Activated CD4-positive, alpha-beta T cell treated with anti-CD3 and anti-CD28 coated beads for 36 hours (primary cell): ENCODE measurements at regions of chr3 and their contacts with region 1.

Region 1: GRCh38 chr3:18717598-18717997 is 292.5 kb upstream of the SATB1 start:
- DNase-seq: no peak
- ATAC-seq: peak; percentile 38
- H3K4me3 Mint-ChIP-seq: peak overlapping the region; percentile 8
- H3K27ac Mint-ChIP-seq: peak overlapping the region; percentile 97
- H3K4me1 Mint-ChIP-seq: peaks cover 71% of the 10 kb centered on the region
- H3K27me3 Mint-ChIP-seq: no peaks in the 10 kb centered on the region

Region 2: GRCh38 chr3:18444595-18445400 is 272.8 kb before region 1 on chr3:
- CTCF ChIA-PET with region 1: interaction called, 5 read pairs
- POLR2A ChIA-PET with region 1: no interaction called
- intact Hi-C with region 1: loop called in 1 of 2 experiments (anchors 1 kb)
- DNase-seq: peak; percentile 89
- ATAC-seq: peak; percentile 66
- H3K4me3 Mint-ChIP-seq: peak overlapping the region; percentile 96
- H3K27ac Mint-ChIP-seq: peak overlapping the region; percentile 91
- H3K4me1 Mint-ChIP-seq: peaks cover 25% of the 10 kb centered on the region
- H3K27me3 Mint-ChIP-seq: no peaks in the 10 kb centered on the region

Region 3: GRCh38 chr3:18544146-18544545 is 173.5 kb before region 1 on chr3:
- CTCF ChIA-PET with region 1: no interaction called
- POLR2A ChIA-PET with region 1: interaction called, 13 read pairs
- intact Hi-C with region 1: no loop called
- DNase-seq: no peak
- ATAC-seq: no peak
- H3K4me3 Mint-ChIP-seq: no peak overlapping the region
- H3K27ac Mint-ChIP-seq: no peak overlapping the region
- H3K4me1 Mint-ChIP-seq: peaks cover 7% of the 10 kb centered on the region
- H3K27me3 Mint-ChIP-seq: no peaks in the 10 kb centered on the region

Region 4: DNA sequence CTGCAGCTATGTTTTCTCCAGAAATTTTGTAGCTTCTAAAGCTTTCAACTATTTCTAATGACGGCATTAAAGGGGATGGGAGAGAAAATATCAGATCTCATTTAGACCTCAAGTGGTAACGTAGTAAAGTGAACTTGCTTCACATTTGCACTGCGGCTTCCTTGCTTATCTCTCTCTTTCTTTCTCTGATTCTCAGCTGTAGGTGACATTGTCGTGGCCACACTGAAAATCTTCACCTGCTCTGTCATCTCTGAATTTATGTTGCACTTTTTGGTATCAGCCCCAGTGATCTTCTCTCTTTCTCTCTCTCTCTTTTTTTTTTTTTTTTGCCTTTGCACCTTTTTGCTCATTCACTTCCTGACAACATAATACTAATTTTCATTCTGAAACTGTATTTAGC is 38.4 kb before region 1 on chr3:
- CTCF ChIA-PET with region 1: interaction called, 5 read pairs
- POLR2A ChIA-PET with region 1: interaction called, 11 read pairs
- intact Hi-C with region 1: loop called (anchors 1 kb)
- DNase-seq: peak; percentile 69
- ATAC-seq: peak; percentile 87
- H3K4me3 Mint-ChIP-seq: peak overlapping the region; percentile 28
- H3K27ac Mint-ChIP-seq: peak overlapping the region; percentile 94
- H3K4me1 Mint-ChIP-seq: peaks cover 84% of the 10 kb centered on the region
- H3K27me3 Mint-ChIP-seq: no peaks in the 10 kb centered on the region